Dorsolateral prefrontal cortex (tissue), 120 donors: ENCODE measurements at regions of chr12 and their contacts with region 1.

Region 1: DNA sequence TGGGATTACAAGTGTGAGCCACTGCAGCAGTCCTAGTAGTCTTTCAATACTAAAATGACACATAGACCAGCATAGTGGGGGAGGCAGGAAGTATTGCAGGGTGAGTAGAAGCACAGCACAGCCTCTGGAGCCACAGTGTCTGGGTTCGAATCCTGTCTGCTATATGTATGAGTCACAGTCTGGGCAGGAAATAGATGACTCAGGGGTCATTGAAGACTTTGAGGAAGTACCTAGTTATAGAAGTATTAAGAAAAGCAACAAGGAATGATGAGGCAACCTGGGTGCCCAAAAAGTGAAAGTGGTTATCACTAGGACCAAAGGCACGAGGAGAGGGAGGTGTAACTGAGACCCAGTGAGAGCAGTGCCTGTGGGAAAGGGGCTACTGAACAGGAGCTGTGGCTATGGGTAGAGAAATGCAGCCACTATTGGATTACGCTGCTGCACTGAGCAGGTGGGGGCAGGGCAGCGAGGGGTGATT is 124.0 kb downstream of the PDE3A start:
- DNase-seq: no peak
- H3K4me3 ChIP-seq: no peak overlapping the region
- H3K27ac ChIP-seq: no peak overlapping the region
- H3K27me3 ChIP-seq: no peaks in the 10 kb centered on the region
- CTCF ChIP-seq: no peak

Region 2: GRCh38 chr12:20426191-20426590 is 66.1 kb before region 1 on chr12:
- intact Hi-C with region 1: no loop called
- DNase-seq: no peak
- H3K4me3 ChIP-seq: no peak overlapping the region
- H3K27ac ChIP-seq: peak overlapping the region in 1 of 59 donors; percentile 30
- H3K27me3 ChIP-seq: no peaks in the 10 kb centered on the region
- CTCF ChIP-seq: no peak

Region 3: GRCh38 chr12:20549107-20549719 is 56.9 kb after region 1 on chr12:
- intact Hi-C with region 1: loop called in 1 of 2 experiments (anchors 10 kb)
- DNase-seq: peak in 2 of 10 donors; percentile 32 to 36
- H3K4me3 ChIP-seq: no peak overlapping the region
- H3K27ac ChIP-seq: no peak overlapping the region
- H3K27me3 ChIP-seq: no peaks in the 10 kb centered on the region
- CTCF ChIP-seq: peak in 55 of 56 donors; percentile 20 to 66 (median 48)

Region 4: DNA sequence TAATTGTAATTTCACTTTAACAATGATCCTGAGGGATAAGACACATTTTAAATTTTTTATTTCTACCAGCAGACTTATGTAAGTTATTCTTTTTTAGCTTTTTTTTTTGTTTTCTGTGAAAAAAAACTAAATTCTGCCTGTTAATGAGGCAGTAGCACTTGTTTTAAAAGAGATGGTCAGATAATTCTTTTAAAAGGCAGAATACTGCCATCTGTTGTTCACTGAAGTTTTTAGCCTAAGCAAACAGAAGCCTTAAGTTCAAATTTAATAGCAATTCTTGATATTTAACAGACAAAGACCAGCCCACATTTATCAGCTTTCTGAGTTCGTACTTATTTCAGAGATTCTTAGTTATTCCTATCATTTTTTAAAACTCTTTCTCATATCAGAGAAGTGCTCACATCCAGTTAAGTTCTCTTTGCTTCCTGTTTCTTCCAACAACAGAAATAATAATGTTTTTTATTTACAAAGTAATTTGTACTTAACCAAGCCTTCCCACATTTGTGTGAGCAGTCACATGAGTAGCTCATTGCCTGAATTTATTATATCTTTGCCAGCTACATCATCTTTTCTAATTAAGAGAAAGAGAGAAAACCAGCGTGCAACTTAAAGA is 109.5 kb after region 1 on chr12:
- intact Hi-C with region 1: loop called (anchors 2 kb)
- DNase-seq: no peak
- H3K4me3 ChIP-seq: no peak overlapping the region
- H3K27ac ChIP-seq: peak overlapping the region in 10 of 59 donors; percentile 2 to 52 (median 12)
- H3K27me3 ChIP-seq: no peaks in the 10 kb centered on the region
- CTCF ChIP-seq: peak; percentile 38 to 93 (median 75)

Region 5: GRCh38 chr12:21815306-21816062 is 1323.2 kb after region 1 on chr12:
- intact Hi-C with region 1: no loop called
- DNase-seq: no peak
- H3K4me3 ChIP-seq: no peak overlapping the region
- H3K27ac ChIP-seq: no peak overlapping the region
- H3K27me3 ChIP-seq: no peaks in the 10 kb centered on the region
- CTCF ChIP-seq: no peak